PC-9 (cell line): ENCODE measurements at regions of chr7 and their contacts with region 1.

Region 1: GRCh38 chr7:44581879-44582603 is at the start of gene TMED4:
- DNase-seq: peak; percentile 97 to 100
- H3K4me3 ChIP-seq: peak within 1 kb of the TSS; percentile 92
- H3K27ac ChIP-seq: peak within 1 kb of the TSS; percentile 78
- H3K4me1 ChIP-seq: peaks cover 27% of the 10 kb centered on the region
- H3K27me3 ChIP-seq: no peaks in the 10 kb centered on the region
- CTCF ChIP-seq: no peak
- total RNA-seq, gene TMED4: 134 and 161 TPM in 2 replicates

Region 2: DNA sequence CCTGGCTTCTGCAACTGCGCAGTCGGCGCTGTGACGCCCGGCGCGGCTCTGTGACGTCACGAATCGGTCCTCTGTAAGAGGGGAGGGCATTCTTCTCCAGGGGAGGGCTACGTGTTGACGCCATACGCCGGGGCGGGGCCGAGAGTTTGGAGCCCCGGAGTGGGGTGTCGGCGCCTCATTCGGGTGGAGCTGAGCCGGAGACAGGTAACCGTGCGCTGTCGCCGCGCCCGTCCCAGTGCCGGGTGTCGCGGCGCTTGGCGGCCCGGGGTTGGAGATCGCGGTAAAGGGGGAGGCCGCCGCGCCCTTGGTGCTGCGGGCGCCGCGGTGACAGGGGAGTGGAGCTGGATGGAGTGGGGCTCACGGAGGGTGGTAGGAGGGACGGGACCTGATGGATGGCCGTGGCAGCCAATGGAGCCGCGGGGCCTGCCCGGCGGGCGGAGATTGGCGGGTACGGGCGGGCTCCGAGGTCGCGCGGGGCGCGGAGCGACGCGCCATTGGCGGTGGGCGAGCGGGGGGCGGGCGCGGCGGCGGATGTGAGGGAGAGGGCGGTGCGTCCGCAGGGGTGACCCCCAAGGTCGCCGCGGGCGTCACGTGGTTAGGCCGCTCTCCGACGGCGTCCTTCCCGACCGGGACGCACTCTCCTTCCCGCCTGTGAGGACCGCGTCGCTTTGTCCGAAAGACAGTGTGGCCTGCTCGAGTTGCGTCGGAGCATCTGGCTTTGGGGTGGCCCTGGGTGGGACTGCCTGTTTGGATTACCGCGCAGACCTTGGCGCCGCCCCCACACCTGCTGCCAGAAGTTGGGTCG is 24.6 kb after region 1 on chr7 and contains the start of gene OGDH:
- CTCF ChIA-PET with region 1: no interaction called
- POLR2A ChIA-PET with region 1: no interaction called
- intact Hi-C with region 1: loop called (anchors 1 kb)
- DNase-seq: peak; percentile 98 to 100
- H3K4me3 ChIP-seq: peak within 1 kb of the TSS; percentile 81
- H3K27ac ChIP-seq: peak within 1 kb of the TSS; percentile 73
- H3K4me1 ChIP-seq: peaks cover 60% of the 10 kb centered on the region
- H3K27me3 ChIP-seq: no peaks in the 10 kb centered on the region
- CTCF ChIP-seq: no peak
- total RNA-seq, gene OGDH: 93.6 and 135 TPM in 2 replicates

Region 3: DNA sequence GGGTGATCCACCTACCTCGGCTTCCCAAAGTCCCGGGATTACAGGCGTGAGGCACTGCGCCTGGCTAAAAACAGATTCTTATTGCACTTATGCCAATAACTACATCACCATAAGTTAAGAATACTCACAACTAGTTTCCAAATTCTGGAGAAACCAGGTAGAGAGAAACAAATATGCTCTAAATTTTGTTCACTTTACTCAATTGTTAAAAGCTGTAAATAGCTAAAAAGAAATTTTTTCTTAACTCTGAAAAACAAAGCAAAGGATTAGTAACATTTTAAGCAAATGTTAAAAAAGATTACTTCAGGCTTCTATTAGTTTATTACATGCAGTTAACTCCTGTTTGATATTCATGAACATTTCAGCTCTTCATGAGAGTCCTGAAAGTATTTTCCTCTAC is 138.3 kb after region 1 on chr7:
- CTCF ChIA-PET with region 1: no interaction called
- POLR2A ChIA-PET with region 1: interaction called, 12 read pairs
- intact Hi-C with region 1: no loop called
- DNase-seq: no peak
- H3K4me3 ChIP-seq: no peak overlapping the region
- H3K27ac ChIP-seq: no peak overlapping the region
- H3K4me1 ChIP-seq: peaks cover 17% of the 10 kb centered on the region
- H3K27me3 ChIP-seq: no peaks in the 10 kb centered on the region
- CTCF ChIP-seq: no peak

Region 4: GRCh38 chr7:44986218-44987053 is 404.4 kb after region 1 on chr7:
- CTCF ChIA-PET with region 1: no interaction called
- POLR2A ChIA-PET with region 1: interaction called, 3 read pairs
- intact Hi-C with region 1: loop called (anchors 10 kb)
- DNase-seq: peak; percentile 92 to 98
- H3K4me3 ChIP-seq: peak overlapping the region; percentile 95
- H3K27ac ChIP-seq: peak overlapping the region; percentile 87
- H3K4me1 ChIP-seq: peaks cover 25% of the 10 kb centered on the region
- H3K27me3 ChIP-seq: no peaks in the 10 kb centered on the region
- CTCF ChIP-seq: no peak; the same call in 1 of the 2 replicates

Region 5: GRCh38 chr7:45129181-45129800 is 547.2 kb after region 1 on chr7:
- CTCF ChIA-PET with region 1: no interaction called
- POLR2A ChIA-PET with region 1: interaction called, 12 read pairs
- intact Hi-C with region 1: no loop called
- DNase-seq: no peak
- H3K4me3 ChIP-seq: no peak overlapping the region
- H3K27ac ChIP-seq: no peak overlapping the region
- H3K4me1 ChIP-seq: no peaks in the 10 kb centered on the region
- H3K27me3 ChIP-seq: peaks cover 6% of the 10 kb centered on the region
- CTCF ChIP-seq: no peak

Region 6: DNA sequence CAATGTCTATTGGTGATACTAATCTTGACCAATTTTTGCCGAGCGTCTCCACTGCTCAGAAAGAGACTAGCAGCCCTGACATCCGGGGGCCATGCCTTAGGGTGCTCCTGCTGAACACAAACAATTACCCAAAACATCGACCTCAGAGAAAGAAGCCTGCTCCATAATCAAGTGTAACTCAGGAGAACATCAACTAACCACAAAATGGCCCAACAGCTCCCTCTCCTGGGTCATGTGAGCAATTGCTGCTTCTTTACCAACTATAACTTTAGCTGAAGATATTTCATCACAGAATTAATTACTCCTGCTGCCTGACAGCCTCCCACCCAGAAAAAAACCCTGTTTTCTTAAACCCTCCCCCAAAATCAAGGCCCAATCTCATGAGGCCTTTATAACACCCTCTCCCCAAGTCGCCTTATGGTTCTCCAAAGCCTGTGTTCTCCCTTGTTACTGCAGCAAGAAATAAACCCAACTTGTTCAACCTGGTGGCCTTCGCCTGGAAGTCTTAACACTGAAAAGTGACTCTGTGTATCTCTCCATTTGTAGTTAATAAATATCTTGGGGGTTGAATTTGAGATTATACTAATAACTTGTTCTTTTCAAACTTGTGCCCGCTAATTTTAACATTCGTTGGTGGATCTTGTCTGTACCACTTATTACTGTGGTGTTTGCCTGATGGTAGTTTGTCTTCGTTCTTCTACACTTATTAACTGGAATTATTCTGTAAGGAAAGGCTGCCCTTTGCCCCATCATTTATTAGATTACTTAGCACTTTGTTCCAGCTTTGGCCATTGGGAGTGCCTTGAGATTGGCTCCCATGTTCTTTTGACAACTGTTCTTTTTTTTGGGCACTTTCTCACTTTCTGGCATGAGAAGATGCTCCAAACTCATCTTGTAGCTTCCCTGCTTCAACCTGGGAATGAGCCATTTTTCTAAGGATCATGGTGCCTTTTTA is 554.3 kb after region 1 on chr7:
- CTCF ChIA-PET with region 1: no interaction called
- POLR2A ChIA-PET with region 1: interaction called, 12 read pairs
- intact Hi-C with region 1: no loop called
- DNase-seq: peak; percentile 63 to 74
- H3K4me3 ChIP-seq: no peak overlapping the region
- H3K27ac ChIP-seq: no peak overlapping the region
- H3K4me1 ChIP-seq: 0 out of 2 replicates have a peak, but pooled peaks cover 3% of the 10 kb centered on the region
- H3K27me3 ChIP-seq: no peaks in the 10 kb centered on the region
- CTCF ChIP-seq: peak; percentile 98